ENCODE measurements at regions of chr4 and their contacts with region 1.

Region 1: DNA sequence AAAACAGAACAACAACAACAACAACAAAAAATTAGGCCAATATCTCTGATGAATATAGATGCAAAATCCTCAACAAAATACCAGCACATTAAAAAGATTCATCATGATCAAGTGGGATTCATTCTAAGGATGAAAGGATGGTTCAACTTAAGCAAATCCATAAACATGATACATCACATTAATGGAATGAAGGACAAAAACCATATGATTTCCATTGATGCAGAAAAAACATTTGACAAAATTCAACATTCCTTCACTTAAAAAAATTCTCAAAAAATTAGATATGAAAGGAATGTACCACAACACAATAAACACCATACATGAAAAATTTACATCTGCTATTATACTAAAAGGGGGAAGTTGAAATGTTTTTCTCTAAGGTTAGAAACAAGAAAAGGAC is 103.3 kb downstream of the IL15 start:
- DNase-seq: no peak
- H3K4me3 Mint-ChIP-seq: no peak overlapping the region
- H3K27ac Mint-ChIP-seq: no peak overlapping the region
- H3K4me1 Mint-ChIP-seq: no peaks in the 10 kb centered on the region
- H3K27me3 Mint-ChIP-seq: peaks cover 4% of the 10 kb centered on the region

Region 2: GRCh38 chr4:141826260-141826659 is 86.6 kb after region 1 on chr4:
- CTCF ChIA-PET with region 1: no interaction called
- POLR2A ChIA-PET with region 1: interaction called, 10 read pairs
- DNase-seq: no peak
- H3K4me3 Mint-ChIP-seq: no peak overlapping the region
- H3K27ac Mint-ChIP-seq: no peak overlapping the region
- H3K4me1 Mint-ChIP-seq: no peaks in the 10 kb centered on the region
- H3K27me3 Mint-ChIP-seq: peaks cover 1% of the 10 kb centered on the region